ENCODE measurements at regions of chr4 and their contacts with region 1.

Region 1: DNA sequence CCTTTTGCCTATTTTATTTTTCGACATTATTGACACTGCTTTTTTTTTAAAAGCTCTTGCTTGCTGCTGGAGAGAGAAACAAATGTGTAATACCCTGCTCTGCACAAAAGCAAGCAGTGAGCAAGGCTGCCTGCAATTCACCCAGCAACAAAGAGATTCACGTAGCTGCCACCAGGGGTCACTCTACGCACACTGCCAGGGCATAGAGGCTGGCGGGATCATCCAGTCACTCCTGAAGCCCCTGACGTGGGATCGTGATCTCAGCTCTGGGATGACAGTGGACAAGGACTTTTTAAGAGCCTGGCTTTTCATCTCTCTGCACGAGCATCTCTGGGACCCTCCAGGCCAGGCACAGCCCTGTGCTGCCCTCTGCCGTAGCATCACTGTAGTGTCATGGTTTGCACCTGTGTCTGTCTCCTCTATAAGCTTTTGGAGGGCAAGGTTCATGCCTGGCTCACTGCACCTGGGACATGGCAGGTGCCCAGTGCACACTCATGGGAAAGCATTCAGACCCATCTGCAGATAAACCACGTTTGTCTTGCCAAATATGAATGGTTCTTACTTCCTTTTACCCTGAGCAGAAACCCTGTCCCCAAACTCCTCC is 19.8 kb downstream of the C4orf50 start:
- DNase-seq: no peak
- H3K4me3 ChIP-seq: no peak overlapping the region
- H3K27ac ChIP-seq: no peak overlapping the region
- H3K4me1 ChIP-seq: no peaks in the 10 kb centered on the region
- H3K27me3 ChIP-seq: peaks cover 0 to 52% (median 0%) of the 10 kb centered on the region in 7 donors
- CTCF ChIP-seq: peak in 10 of 11 experiments; percentile 44 to 86 (median 78)
- POLR2A ChIP-seq: no peak

Region 2: GRCh38 chr4:5956285-5957021 is 42.0 kb before region 1 on chr4:
- intact Hi-C with region 1: no loop called
- DNase-seq: peak; percentile 87
- H3K4me3 ChIP-seq: no peak overlapping the region
- H3K27ac ChIP-seq: peak overlapping the region in 2 of 8 donors; percentile 38 to 54
- H3K4me1 ChIP-seq: peaks cover 0 to 52% (median 15%) of the 10 kb centered on the region in 6 donors
- H3K27me3 ChIP-seq: peaks cover 0 to 21% (median 0%) of the 10 kb centered on the region in 7 donors
- CTCF ChIP-seq: no peak
- POLR2A ChIP-seq: no peak

Region 3: GRCh38 chr4:6087673-6088341 is 89.4 kb after region 1 on chr4:
- intact Hi-C with region 1: loop called (anchors 5 kb)
- DNase-seq: no peak
- H3K4me3 ChIP-seq: no peak overlapping the region
- H3K27ac ChIP-seq: no peak overlapping the region
- H3K4me1 ChIP-seq: no peaks in the 10 kb centered on the region
- H3K27me3 ChIP-seq: peaks cover 0 to 26% (median 0%) of the 10 kb centered on the region in 7 donors
- CTCF ChIP-seq: peak in 7 of 11 experiments; percentile 21 to 53 (median 43)
- POLR2A ChIP-seq: no peak

Measured in spleen (tissue), 13 donors.